ENCODE measurements at regions of chr19 and their contacts with region 1.

Region 1: GRCh38 chr19:14556662-14557188 is 15.1 kb downstream of the NDUFB7 start:
- DNase-seq: peak; percentile 80
- ATAC-seq: peak; percentile 82
- H3K4me3 ChIP-seq: no peak overlapping the region
- H3K4me3 Mint-ChIP-seq: peak overlapping the region; percentile 41
- H3K27ac ChIP-seq: no peak overlapping the region
- H3K27ac Mint-ChIP-seq: no peak overlapping the region
- H3K4me1 ChIP-seq: peaks cover 4 to 19% of the 10 kb centered on the region in 2 donors
- H3K4me1 Mint-ChIP-seq: peaks cover 30% of the 10 kb centered on the region
- H3K27me3 ChIP-seq: no peaks in the 10 kb centered on the region
- H3K27me3 Mint-ChIP-seq: no peaks in the 10 kb centered on the region
- CTCF ChIP-seq: peak; percentile 92

Region 2: DNA sequence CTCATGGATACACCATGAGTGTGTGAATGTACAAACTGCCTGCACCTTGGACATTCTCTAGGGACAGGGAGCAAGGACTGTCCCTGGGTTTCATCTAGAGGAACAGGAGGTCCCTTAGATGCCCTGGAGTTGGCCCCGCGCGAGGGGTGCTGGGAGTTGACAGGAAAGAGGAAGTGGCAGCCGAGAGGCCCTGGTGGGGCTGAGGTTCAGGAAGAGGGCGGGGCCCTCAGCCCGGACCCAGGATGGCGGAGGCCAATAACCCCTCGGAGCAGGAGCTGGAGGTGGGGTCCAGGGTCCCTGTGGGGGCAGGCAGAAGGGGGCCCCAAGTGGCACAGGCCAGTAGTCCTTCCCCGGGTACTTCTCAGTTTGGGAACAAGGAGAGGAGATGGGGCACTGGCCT is 116.7 kb before region 1 on chr19:
- CTCF ChIA-PET with region 1: no interaction called
- POLR2A ChIA-PET with region 1: no interaction called
- intact Hi-C with region 1: no loop called
- DNase-seq: peak; percentile 86
- ATAC-seq: peak; percentile 99
- H3K4me3 ChIP-seq: peak overlapping the region; percentile 48 to 95 (median 70)
- H3K4me3 Mint-ChIP-seq: peak overlapping the region; percentile 95
- H3K27ac ChIP-seq: peak overlapping the region; percentile 46 to 84
- H3K27ac Mint-ChIP-seq: peak overlapping the region; percentile 96
- H3K4me1 ChIP-seq: peaks cover 20 to 23% of the 10 kb centered on the region in 2 donors
- H3K4me1 Mint-ChIP-seq: peaks cover 33% of the 10 kb centered on the region
- H3K27me3 ChIP-seq: no peaks in the 10 kb centered on the region
- H3K27me3 Mint-ChIP-seq: no peaks in the 10 kb centered on the region
- CTCF ChIP-seq: no peak

Region 3: GRCh38 chr19:14505488-14506432 is 51.0 kb before region 1 on chr19:
- CTCF ChIA-PET with region 1: interaction called, 7 read pairs
- POLR2A ChIA-PET with region 1: no interaction called
- intact Hi-C with region 1: loop called (anchors 1 kb)
- DNase-seq: peak; percentile 70
- ATAC-seq: peak; percentile 81
- H3K4me3 ChIP-seq: no peak overlapping the region
- H3K4me3 Mint-ChIP-seq: no peak overlapping the region
- H3K27ac ChIP-seq: no peak overlapping the region
- H3K27ac Mint-ChIP-seq: peak overlapping the region; percentile 1
- H3K4me1 ChIP-seq: no peaks in the 10 kb centered on the region
- H3K4me1 Mint-ChIP-seq: peaks cover 3% of the 10 kb centered on the region
- H3K27me3 ChIP-seq: peaks cover 0 to 4% (median 0%) of the 10 kb centered on the region in 4 experiments
- H3K27me3 Mint-ChIP-seq: peaks cover 14% of the 10 kb centered on the region
- CTCF ChIP-seq: peak; percentile 78

Region 4: GRCh38 chr19:14542711-14543328 is 13.9 kb before region 1 on chr19:
- CTCF ChIA-PET with region 1: interaction called, 17 read pairs
- POLR2A ChIA-PET with region 1: no interaction called
- intact Hi-C with region 1: no loop called
- DNase-seq: no peak
- ATAC-seq: no peak
- H3K4me3 ChIP-seq: no peak overlapping the region
- H3K4me3 Mint-ChIP-seq: no peak overlapping the region
- H3K27ac ChIP-seq: no peak overlapping the region
- H3K27ac Mint-ChIP-seq: peak overlapping the region; percentile 20
- H3K4me1 ChIP-seq: peaks cover 0 to 5% of the 10 kb centered on the region in 2 donors
- H3K4me1 Mint-ChIP-seq: peaks cover 24% of the 10 kb centered on the region
- H3K27me3 ChIP-seq: no peaks in the 10 kb centered on the region
- H3K27me3 Mint-ChIP-seq: no peaks in the 10 kb centered on the region
- CTCF ChIP-seq: no peak

Measured in B cell (primary cell).